Transverse colon (tissue), 4 donors: ENCODE measurements at regions of chr2 and their contacts with region 1.

Region 1: DNA sequence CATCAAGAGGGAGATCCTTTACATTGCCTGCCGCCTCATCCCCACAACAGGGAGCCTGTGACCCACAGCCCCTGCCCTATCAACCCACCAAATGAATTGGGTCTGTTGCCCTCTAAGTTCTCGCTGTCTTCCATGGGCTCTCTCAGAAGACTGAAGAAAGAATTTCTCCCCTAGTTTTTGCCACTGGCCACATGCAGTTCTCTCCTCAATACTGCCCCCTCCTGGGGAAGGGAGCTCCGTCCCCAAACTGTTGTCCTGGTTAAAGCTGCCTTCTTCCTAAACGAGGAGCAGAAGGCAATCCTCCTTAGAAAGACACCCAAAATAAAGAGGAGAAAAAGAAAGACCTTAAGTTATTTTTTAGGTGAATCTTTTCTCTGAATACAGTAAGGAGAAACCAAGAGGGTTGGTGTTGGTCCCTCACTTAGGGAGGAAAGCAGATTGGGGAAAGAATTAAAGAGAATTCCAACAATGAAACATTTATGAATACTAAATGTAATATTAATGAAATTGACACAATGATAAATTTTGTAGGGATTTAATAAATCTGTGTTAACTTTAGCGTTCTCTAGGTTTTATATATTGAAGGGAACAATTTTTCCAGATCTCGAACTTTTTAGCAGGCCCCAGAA is 31.1 kb upstream of the SATB2 start:
- DNase-seq: peak; percentile 68
- H3K4me3 ChIP-seq: no peak overlapping the region
- H3K27ac ChIP-seq: no peak overlapping the region
- H3K4me1 ChIP-seq: peaks cover 0 to 3% (median 0%) of the 10 kb centered on the region in 4 donors
- H3K27me3 ChIP-seq: peaks cover 4% of the 10 kb centered on the region
- CTCF ChIP-seq: peak; percentile 53 to 70 (median 59)
- EP300 ChIP-seq: no peak
- POLR2A ChIP-seq: no peak

Region 2: DNA sequence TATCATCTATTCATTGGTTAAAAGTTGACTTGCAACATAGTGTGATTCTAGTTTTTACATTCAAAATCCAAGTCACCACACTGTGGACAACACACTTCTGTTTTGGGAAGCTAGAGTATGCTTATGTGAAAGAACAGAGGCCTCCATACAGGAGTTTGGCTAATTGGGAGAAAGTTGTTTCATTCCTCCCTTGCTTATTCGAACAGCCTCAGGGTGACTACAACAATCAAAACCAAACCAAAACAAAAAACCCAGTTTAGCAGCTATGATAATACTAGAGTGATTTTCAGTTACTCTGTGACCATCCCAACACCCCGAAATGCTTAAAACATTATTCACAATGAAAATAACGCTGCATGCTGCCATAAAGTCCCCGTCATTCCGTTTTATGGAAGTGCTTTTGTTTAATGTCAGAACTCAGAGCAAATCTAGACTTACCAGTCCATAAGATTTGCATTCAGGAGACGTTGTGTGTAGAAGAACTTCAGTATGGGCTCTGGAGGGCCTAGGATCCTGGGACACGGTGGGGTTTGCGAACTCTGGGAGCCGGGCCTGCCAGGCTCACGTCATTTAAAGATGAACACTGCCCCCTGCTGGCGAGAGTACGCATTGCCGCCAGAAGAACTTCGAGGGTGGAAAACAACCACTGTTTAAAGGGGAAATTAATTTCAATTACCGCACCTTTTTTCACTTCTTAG is 250.7 kb after region 1 on chr2:
- in situ Hi-C with region 1: loop called in 1 of 4 experiments (anchors 25 kb)
- intact Hi-C with region 1: no loop called
- DNase-seq: peak; percentile 85
- H3K4me3 ChIP-seq: peak overlapping the region in 2 of 4 donors; percentile 1 to 21
- H3K27ac ChIP-seq: peak overlapping the region; percentile 27 to 62 (median 57)
- H3K4me1 ChIP-seq: peaks cover 6 to 26% (median 21%) of the 10 kb centered on the region in 4 donors
- H3K27me3 ChIP-seq: no peaks in the 10 kb centered on the region
- CTCF ChIP-seq: peak; percentile 92 to 98 (median 96)
- EP300 ChIP-seq: no peak
- POLR2A ChIP-seq: no peak